HepG2 (cell line): ENCODE measurements at regions of chr2 and their contacts with region 1.

Region 1: GRCh38 chr2:237154082-237154638 is 68.5 kb downstream of the COPS8 start:
- DNase-seq: peak; percentile 53
- ATAC-seq: peak; percentile 65
- H3K4me3 ChIP-seq: no peak overlapping the region
- H3K27ac ChIP-seq: no peak overlapping the region
- H3K4me1 ChIP-seq: no peaks in the 10 kb centered on the region
- H3K27me3 ChIP-seq: peaks cover 0 to 10% of the 10 kb centered on the region in 2 experiments; a peak in 1 of 5 replicates
- CTCF ChIP-seq: peak; percentile 82
- EP300 ChIP-seq: no peak
- POLR2A ChIP-seq: no peak
- RAD21 ChIP-seq: peak; percentile 75

Region 2: DNA sequence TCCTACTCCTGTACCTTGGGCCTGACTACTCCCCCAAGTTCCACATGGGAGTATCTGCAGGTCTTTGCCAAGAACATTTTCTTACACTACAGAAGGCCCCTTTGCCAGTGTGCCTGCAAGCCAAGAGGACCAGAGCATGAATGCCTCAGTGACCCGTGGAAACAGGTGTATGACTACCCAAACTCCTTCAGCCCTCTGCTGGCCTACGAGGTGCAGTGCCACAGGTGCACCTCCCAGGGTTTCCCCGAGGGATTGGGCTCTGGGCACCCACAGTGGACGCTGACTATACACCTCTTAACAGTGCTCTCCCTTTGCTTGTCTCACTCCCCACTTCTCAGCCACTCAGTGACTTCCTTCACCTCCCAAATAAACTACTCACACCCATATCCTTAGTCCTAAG is 168.4 kb after region 1 on chr2:
- CTCF ChIA-PET with region 1: interaction called, 6 read pairs
- POLR2A ChIA-PET with region 1: no interaction called
- in situ Hi-C with region 1: loop called (anchors 10 kb)
- intact Hi-C with region 1: loop called (anchors 1 kb)
- DNase-seq: peak; percentile 20
- ATAC-seq: peak; percentile 95
- H3K4me3 ChIP-seq: no peak overlapping the region
- H3K27ac ChIP-seq: no peak overlapping the region
- H3K4me1 ChIP-seq: no peaks in the 10 kb centered on the region
- H3K27me3 ChIP-seq: peaks cover 5 to 48% of the 10 kb centered on the region in 2 experiments; a peak in 2 of 5 replicates
- CTCF ChIP-seq: peak; percentile 58
- EP300 ChIP-seq: no peak
- POLR2A ChIP-seq: no peak
- RAD21 ChIP-seq: no peak

Region 3: GRCh38 chr2:237413777-237414661 is 259.9 kb after region 1 on chr2 and contains the start of gene COL6A3:
- CTCF ChIA-PET with region 1: interaction called, 11 read pairs
- POLR2A ChIA-PET with region 1: no interaction called
- in situ Hi-C with region 1: loop called (anchors 10 kb)
- intact Hi-C with region 1: loop called (anchors 1 kb)
- DNase-seq: no peak
- ATAC-seq: no peak
- H3K4me3 ChIP-seq: no peak within 1 kb of the TSS
- H3K27ac ChIP-seq: no peak within 1 kb of the TSS
- H3K4me1 ChIP-seq: no peaks in the 10 kb centered on the region
- H3K27me3 ChIP-seq: peaks cover 8 to 89% of the 10 kb centered on the region in 2 experiments; a peak in 4 of 5 replicates
- CTCF ChIP-seq: no peak
- EP300 ChIP-seq: no peak
- POLR2A ChIP-seq: no peak
- RAD21 ChIP-seq: no peak
- total RNA-seq, gene COL6A3: not detected in 2 replicates

Region 4: DNA sequence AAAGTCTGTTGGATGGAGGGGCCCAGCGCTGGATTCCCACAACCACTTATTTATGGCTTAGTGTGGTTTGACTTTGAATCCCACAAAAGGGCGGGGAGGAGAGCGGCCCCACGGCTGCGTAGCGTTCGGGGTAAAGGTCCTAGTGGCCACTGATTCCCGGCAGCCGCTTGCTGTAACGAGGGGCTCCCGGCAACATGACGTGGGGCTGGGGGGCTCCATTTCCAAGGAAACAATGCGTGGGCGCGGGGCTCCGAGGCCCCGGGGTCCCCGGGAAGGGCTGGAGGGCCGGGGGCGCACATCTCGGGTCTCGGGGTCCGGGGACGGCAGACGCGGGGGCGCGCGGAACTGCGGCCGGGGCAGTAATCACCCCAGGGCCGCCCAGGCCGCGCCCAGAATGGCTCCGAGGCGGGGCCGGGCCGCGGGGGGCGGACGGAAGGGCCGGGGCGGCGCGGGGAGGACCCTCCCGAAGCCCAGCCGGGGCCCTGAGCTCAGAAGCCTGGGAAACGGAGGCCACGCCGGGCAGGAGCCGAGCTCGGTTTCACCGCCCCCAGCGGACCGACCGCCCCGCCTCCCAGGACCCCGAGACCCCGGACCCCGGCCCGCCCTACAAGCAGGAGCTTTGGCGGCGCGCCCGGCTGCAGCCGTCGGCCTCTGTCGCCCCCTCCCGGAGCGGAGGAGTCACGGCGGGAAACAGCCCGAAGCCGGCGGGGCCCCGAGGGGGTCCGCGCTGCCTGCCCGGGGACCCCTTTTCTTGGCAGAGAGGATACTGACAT is 321.0 kb after region 1 on chr2:
- CTCF ChIA-PET with region 1: no interaction called
- POLR2A ChIA-PET with region 1: no interaction called
- in situ Hi-C with region 1: no loop called
- intact Hi-C with region 1: loop called (anchors 1 kb)
- DNase-seq: peak; percentile 56
- ATAC-seq: peak; percentile 89
- H3K4me3 ChIP-seq: peak overlapping the region; percentile 73 to 92 (median 85)
- H3K27ac ChIP-seq: peak overlapping the region; percentile 74
- H3K4me1 ChIP-seq: peaks cover 15% of the 10 kb centered on the region
- H3K27me3 ChIP-seq: peaks cover 0 to 34% of the 10 kb centered on the region in 2 experiments; a peak in 4 of 5 replicates
- CTCF ChIP-seq: peak; percentile 90
- EP300 ChIP-seq: peak in 1 of 2 experiments; percentile 20; a peak in 1 of 4 replicates
- POLR2A ChIP-seq: peak; percentile 63 to 85
- RAD21 ChIP-seq: peak; percentile 67

Region 5: GRCh38 chr2:237572021-237572741 is 418.0 kb after region 1 on chr2:
- CTCF ChIA-PET with region 1: interaction called, 3 read pairs
- POLR2A ChIA-PET with region 1: no interaction called
- in situ Hi-C with region 1: loop called (anchors 5 kb)
- intact Hi-C with region 1: loop called (anchors 1 kb)
- DNase-seq: peak; percentile 84
- ATAC-seq: peak; percentile 91
- H3K4me3 ChIP-seq: no peak overlapping the region; a peak in 1 of 6 replicates
- H3K27ac ChIP-seq: no peak overlapping the region
- H3K4me1 ChIP-seq: peaks cover 19% of the 10 kb centered on the region
- H3K27me3 ChIP-seq: peaks cover 0 to 13% of the 10 kb centered on the region in 2 experiments; a peak in 3 of 5 replicates
- CTCF ChIP-seq: peak; percentile 100
- EP300 ChIP-seq: no peak
- POLR2A ChIP-seq: 0 out of 4 replicates have a peak, but pooled peaks of 1 of the 2 experiments have one; percentile 30
- RAD21 ChIP-seq: peak; percentile 100